ENCODE measurements at regions of chr4 and their contacts with region 1.

Region 1: DNA sequence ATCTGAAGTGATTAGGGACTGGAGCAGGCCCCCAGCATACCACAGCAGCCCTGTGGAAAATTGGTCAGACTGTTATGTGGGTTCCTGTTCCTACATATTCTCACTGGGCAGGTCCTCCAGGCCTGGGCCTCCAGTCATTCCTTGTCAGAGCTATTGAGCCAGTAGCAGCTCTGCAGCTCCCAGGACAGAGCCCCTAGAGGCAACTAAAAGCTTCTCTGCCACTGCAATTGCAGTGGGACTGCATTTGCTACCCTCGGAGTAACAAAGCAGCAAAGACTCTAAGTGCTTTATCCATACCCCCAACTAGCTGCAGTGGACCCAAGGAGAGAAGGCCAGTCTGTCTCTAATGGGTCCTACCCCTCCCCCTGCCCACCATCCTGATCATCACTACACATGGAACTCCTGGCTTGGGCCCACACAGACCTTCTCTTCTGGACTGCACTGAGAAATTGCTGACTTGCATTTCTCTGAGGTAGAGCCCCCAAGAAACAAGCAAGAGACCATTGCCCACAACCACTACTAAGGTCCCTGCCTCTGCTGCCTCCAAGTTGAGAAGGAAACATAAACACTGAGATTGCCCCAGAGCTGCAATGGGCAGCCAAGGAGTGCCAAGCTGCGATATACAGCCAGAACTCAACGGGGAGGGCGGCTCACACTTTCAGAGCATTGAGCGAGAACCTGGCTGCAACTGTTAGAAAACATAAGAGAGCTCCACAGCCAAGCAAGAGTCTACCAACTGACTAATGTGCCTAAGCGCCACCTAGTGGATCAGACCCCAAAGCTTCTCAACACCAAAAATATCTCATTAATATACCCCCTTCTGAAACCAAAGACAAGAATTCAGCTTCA is 738.7 kb upstream of the NDST4 start:
- DNase-seq: peak; percentile 71
- H3K4me3 Mint-ChIP-seq: no peak overlapping the region
- H3K27ac Mint-ChIP-seq: no peak overlapping the region
- H3K4me1 Mint-ChIP-seq: no peaks in the 10 kb centered on the region
- H3K27me3 Mint-ChIP-seq: peaks cover 25% of the 10 kb centered on the region
- CTCF ChIP-seq: peak; percentile 45

Region 2: GRCh38 chr4:114780205-114780604 is 1071.9 kb before region 1 on chr4:
- CTCF ChIA-PET with region 1: interaction called, 6 read pairs
- POLR2A ChIA-PET with region 1: no interaction called
- intact Hi-C with region 1: loop called (anchors 1 kb)
- DNase-seq: peak; percentile 64
- H3K4me3 Mint-ChIP-seq: no peak overlapping the region
- H3K27ac Mint-ChIP-seq: no peak overlapping the region
- H3K4me1 Mint-ChIP-seq: no peaks in the 10 kb centered on the region
- H3K27me3 Mint-ChIP-seq: peaks cover 12% of the 10 kb centered on the region
- CTCF ChIP-seq: peak; percentile 54

Region 3: GRCh38 chr4:115090483-115091075 is 761.6 kb before region 1 on chr4:
- CTCF ChIA-PET with region 1: interaction called, 5 read pairs
- POLR2A ChIA-PET with region 1: no interaction called
- intact Hi-C with region 1: loop called (anchors 1 kb)
- DNase-seq: peak; percentile 53
- H3K4me3 Mint-ChIP-seq: no peak overlapping the region
- H3K27ac Mint-ChIP-seq: no peak overlapping the region
- H3K4me1 Mint-ChIP-seq: no peaks in the 10 kb centered on the region
- H3K27me3 Mint-ChIP-seq: peaks cover 26% of the 10 kb centered on the region
- CTCF ChIP-seq: peak; percentile 53

Region 4: DNA sequence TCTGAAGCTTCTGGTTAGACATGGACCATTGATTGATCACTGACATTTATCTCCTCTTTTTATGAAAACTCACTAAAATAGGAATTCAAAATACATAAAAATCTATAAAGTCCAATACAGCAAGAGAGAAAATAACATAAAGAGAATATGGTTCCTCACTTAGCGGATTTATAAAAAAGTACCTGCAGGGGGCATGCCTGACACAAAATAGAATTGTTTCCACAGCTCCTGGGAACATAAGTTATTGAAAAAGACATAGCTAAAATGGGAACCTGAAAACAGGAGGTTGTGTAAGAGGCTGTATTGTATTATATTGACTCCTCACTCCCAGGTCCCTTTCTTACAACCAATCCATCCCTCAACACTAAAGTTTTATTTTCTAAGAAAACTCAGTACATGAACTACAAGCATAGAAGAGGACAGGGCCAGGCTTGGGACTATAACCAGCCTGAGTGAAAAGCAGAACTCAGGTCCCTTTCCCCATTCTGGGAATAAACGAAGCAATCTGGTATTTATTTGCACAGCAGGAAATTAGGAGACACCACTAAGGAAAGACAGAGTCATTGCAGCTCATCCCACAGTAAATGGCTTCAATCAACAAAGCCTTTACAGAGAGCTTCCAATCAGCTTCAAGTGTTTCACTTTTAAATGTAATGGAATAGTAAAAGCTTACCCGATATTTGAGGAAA is 617.6 kb before region 1 on chr4:
- CTCF ChIA-PET with region 1: interaction called, 11 read pairs
- POLR2A ChIA-PET with region 1: no interaction called
- intact Hi-C with region 1: no loop called
- DNase-seq: peak; percentile 28
- H3K4me3 Mint-ChIP-seq: no peak overlapping the region
- H3K27ac Mint-ChIP-seq: no peak overlapping the region
- H3K4me1 Mint-ChIP-seq: peaks cover 8% of the 10 kb centered on the region
- H3K27me3 Mint-ChIP-seq: peaks cover 24% of the 10 kb centered on the region
- CTCF ChIP-seq: peak; percentile 40

Region 5: GRCh38 chr4:115537387-115537786 is 314.8 kb before region 1 on chr4:
- CTCF ChIA-PET with region 1: interaction called, 13 read pairs
- POLR2A ChIA-PET with region 1: no interaction called
- intact Hi-C with region 1: loop called (anchors 10 kb)
- DNase-seq: peak; percentile 26
- H3K4me3 Mint-ChIP-seq: no peak overlapping the region
- H3K27ac Mint-ChIP-seq: no peak overlapping the region
- H3K4me1 Mint-ChIP-seq: no peaks in the 10 kb centered on the region
- H3K27me3 Mint-ChIP-seq: peaks cover 19% of the 10 kb centered on the region
- CTCF ChIP-seq: peak; percentile 44

Region 6: DNA sequence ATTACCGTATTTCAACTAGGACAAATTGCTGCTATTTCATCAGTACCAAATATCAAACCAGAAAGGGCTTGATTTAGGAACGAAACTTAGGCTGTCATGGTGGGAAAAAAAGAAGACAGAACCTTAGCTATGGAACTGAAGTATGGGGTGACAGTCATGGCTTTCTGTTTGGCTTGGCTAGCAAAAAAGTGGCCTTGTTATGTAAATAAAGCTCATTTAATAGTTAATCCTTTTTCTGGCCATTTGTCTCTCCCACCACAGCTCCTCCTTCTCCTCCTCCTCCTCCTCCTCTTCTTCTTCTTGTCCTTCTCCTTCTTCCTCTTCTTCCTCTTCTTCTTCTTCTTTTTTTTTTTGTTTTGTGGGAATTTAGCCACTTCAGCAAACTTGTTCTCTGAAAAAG is 304.0 kb before region 1 on chr4:
- CTCF ChIA-PET with region 1: interaction called, 5 read pairs
- POLR2A ChIA-PET with region 1: no interaction called
- intact Hi-C with region 1: loop called (anchors 10 kb)
- DNase-seq: no peak
- H3K4me3 Mint-ChIP-seq: no peak overlapping the region
- H3K27ac Mint-ChIP-seq: no peak overlapping the region
- H3K4me1 Mint-ChIP-seq: no peaks in the 10 kb centered on the region
- H3K27me3 Mint-ChIP-seq: peaks cover 31% of the 10 kb centered on the region
- CTCF ChIP-seq: no peak

Region 7: DNA sequence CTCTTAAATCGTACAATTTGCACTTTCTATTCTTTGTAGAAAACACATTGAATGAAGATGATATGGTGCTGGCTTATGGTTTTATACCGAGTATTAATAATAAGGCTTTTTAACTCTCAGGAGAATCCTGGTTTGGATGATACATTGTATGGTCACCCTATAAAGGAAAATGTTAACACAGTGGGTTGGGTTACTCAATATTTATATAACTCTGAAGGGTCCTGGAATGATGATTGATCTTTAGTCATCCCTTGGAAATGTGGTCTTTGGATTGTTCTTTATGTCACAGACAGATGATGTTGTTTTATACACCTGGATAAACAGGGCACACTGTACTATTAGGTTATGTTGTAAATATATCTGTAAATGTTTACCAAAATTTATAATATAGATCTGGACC is 242.5 kb before region 1 on chr4:
- CTCF ChIA-PET with region 1: no interaction called
- POLR2A ChIA-PET with region 1: no interaction called
- intact Hi-C with region 1: no loop called
- DNase-seq: no peak
- H3K4me3 Mint-ChIP-seq: no peak overlapping the region
- H3K27ac Mint-ChIP-seq: no peak overlapping the region
- H3K4me1 Mint-ChIP-seq: no peaks in the 10 kb centered on the region
- H3K27me3 Mint-ChIP-seq: peaks cover 31% of the 10 kb centered on the region
- CTCF ChIP-seq: no peak

Measured in MCF 10A (cell line).